Activated T-helper 2 cell treated with anti-CD3 and anti-CD28 coated beads, Interferon-gamma antibody, Interleukin-2, Interleukin-4, amounts not matched to agents 10 μg/mL and 5 μg/mL and 100 μg/mL, durations not matched to agents 14 hours and 24 hours and 36 hours (primary cell): ENCODE measurements at regions of chr1 and their contacts with region 1.

Region 1: GRCh38 chr1:30718636-30719405 is 4.6 kb downstream of the MATN1 start:
- DNase-seq: peak; percentile 96
- H3K4me3 Mint-ChIP-seq: peak overlapping the region; percentile 86
- H3K27ac Mint-ChIP-seq: peak overlapping the region; percentile 93
- H3K4me1 Mint-ChIP-seq: peaks cover 10% of the 10 kb centered on the region
- H3K27me3 Mint-ChIP-seq: no peaks in the 10 kb centered on the region

Region 2: GRCh38 chr1:29230553-29231378 is 1488.1 kb before region 1 on chr1 and contains the start of gene MECR:
- intact Hi-C with region 1: loop called (anchors 10 kb)
- DNase-seq: peak; percentile 96
- H3K4me3 Mint-ChIP-seq: peak within 1 kb of the TSS; percentile 89
- H3K27ac Mint-ChIP-seq: peak within 1 kb of the TSS; percentile 80
- H3K4me1 Mint-ChIP-seq: peaks cover 15% of the 10 kb centered on the region
- H3K27me3 Mint-ChIP-seq: peaks cover 14% of the 10 kb centered on the region
- total RNA-seq, gene MECR: 33.0 and 34.6 TPM in 2 replicates

Region 3: DNA sequence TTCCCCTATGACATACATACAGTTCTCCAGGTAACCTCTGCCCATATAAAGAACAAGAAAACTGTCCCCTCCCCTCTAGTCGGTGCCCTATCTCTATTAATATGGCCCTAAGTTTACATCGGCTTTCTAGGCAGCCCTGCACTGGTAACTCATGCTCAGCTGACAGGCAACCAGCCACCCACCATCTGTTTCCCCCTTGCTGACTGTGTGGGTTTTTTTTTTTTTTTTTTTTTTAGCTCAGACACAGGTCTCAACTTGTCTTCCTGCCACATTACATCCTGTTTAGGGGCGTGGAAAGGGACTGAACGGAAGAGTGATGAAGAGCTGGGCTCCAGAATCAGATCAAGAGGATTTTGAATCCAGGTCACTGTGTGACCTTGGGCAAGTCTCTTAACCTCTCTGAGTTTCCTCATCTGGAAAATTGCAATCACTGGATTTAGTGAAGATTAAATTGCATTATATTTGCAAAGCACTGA is 24.8 kb after region 1 on chr1:
- intact Hi-C with region 1: loop called (anchors 1 kb)
- DNase-seq: peak; percentile 70
- H3K4me3 Mint-ChIP-seq: peak overlapping the region; percentile 49
- H3K27ac Mint-ChIP-seq: peak overlapping the region; percentile 84
- H3K4me1 Mint-ChIP-seq: peaks cover 89% of the 10 kb centered on the region
- H3K27me3 Mint-ChIP-seq: no peaks in the 10 kb centered on the region

Region 4: GRCh38 chr1:30756545-30757195 is 37.8 kb after region 1 on chr1:
- intact Hi-C with region 1: loop called (anchors 2 kb)
- DNase-seq: peak; percentile 66
- H3K4me3 Mint-ChIP-seq: peak overlapping the region; percentile 97
- H3K27ac Mint-ChIP-seq: peak overlapping the region; percentile 96
- H3K4me1 Mint-ChIP-seq: peaks cover 79% of the 10 kb centered on the region
- H3K27me3 Mint-ChIP-seq: no peaks in the 10 kb centered on the region

Region 5: DNA sequence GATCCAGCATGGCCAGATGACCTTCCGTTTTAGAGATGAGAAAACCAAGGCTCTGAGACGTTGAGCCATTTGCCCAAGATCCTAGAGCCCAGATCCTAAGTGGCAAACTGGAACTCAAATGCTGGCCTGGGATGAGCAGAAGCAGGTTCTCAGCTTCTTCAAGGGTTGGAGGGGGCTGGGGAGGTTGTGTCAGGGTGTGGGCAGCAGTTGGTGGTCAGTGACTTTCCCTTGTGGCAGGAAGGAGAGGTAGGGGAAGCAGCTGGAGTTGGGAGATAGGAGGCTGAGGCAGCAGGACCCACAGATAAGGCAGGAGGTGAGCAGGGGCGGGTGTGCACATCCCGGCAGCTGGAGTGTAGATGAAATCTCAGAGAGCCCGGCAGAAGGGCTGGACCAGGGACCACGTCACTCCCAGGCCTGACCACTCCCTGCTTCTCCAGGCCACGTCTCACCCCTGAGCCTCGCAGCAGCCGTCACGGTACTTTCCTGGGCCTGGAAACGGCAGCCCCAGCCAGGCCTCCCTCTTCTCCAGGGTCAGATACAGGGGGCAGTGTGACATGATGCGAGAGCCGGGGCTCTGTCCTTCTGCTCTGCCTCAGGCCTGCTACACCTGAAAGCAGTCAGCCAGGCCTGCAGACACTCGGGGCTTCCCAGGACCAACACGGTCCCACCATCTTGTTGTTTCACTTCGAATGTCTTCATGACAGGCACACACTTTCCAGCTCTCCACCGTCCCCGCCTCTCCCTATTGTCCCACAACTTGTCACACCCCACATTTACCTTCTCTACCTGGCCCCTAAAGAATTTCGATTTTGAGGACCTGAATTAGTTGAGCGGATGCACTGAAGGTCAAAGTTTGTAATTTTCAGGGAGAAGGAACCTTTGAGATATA is 50.3 kb after region 1 on chr1:
- intact Hi-C with region 1: no loop called
- DNase-seq: no peak
- H3K4me3 Mint-ChIP-seq: no peak overlapping the region
- H3K27ac Mint-ChIP-seq: no peak overlapping the region
- H3K4me1 Mint-ChIP-seq: peaks cover 27% of the 10 kb centered on the region
- H3K27me3 Mint-ChIP-seq: peaks cover 2% of the 10 kb centered on the region

Region 6: DNA sequence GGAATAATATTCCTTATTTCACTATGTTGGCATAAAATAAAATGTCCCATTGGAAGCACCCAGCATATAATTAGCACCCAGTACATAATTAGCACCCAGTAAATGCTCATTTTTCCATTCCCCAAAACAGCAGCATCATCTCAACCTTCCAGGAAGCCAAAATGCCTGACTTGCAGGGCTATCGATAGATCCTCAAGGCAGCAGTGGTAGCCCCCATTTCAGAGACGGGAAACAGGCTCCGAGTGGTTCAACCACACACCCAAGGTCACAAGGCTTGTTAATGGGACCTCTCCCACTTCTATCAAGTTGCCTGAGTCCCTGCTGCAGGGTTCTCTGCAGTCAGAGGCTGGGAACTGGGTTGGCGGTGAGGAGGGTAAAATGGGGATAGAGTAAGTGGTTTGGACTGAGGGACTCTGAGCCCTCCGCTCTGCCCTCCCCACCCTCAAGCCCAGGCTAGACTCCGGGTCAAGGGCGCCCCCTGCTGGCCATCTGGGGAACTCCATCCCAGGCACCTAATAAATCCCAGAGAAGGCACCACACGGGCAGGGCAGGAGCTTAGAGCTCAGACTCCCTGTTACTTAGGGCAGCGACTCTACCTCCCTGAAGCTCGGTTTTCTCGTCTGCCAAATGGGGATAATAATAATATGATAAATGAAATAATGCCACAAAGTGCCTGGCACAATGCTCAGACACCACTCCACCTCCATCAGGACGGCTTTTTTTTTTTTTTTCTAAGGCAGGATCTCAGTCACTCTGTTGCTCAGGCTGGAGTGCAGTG is 60.7 kb after region 1 on chr1:
- intact Hi-C with region 1: loop called (anchors 1 kb)
- DNase-seq: peak; percentile 84
- H3K4me3 Mint-ChIP-seq: no peak overlapping the region
- H3K27ac Mint-ChIP-seq: no peak overlapping the region
- H3K4me1 Mint-ChIP-seq: peaks cover 18% of the 10 kb centered on the region
- H3K27me3 Mint-ChIP-seq: no peaks in the 10 kb centered on the region

Region 7: DNA sequence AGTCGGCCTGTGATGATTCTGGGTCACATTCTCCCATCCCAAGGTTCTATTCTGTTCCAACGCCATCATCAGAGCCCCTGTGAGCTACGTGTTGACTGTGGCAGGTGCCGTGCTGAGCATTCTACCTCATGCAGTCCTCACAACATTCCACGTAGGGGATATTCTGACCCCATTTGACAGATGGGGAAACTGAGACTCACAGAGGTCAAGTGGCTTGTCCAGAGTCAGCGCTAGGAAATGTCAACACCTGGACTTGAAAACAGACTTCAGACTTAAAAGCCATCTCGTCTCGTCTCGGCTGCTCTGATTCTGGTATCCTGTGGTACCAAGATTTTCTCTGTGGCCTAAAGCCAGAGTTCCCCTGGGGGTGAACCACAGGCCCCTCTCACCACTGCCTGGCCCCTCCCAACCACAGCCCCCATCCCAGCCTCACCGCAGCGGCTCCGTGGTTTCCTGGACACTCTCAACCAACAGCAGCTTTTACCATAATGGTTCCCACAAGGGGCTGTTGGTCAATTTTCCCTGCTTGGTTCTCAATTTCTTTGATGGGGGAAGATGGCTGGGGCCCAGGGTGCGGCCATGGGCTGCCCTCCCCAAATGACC is 150.1 kb after region 1 on chr1:
- intact Hi-C with region 1: no loop called
- DNase-seq: no peak
- H3K4me3 Mint-ChIP-seq: no peak overlapping the region
- H3K27ac Mint-ChIP-seq: no peak overlapping the region
- H3K4me1 Mint-ChIP-seq: peaks cover 4% of the 10 kb centered on the region
- H3K27me3 Mint-ChIP-seq: peaks cover 24% of the 10 kb centered on the region

Region 8: GRCh38 chr1:30911046-30911954 is 192.5 kb after region 1 on chr1:
- intact Hi-C with region 1: loop called (anchors 1 kb)
- DNase-seq: peak; percentile 36
- H3K4me3 Mint-ChIP-seq: no peak overlapping the region
- H3K27ac Mint-ChIP-seq: no peak overlapping the region
- H3K4me1 Mint-ChIP-seq: peaks cover 11% of the 10 kb centered on the region
- H3K27me3 Mint-ChIP-seq: peaks cover 30% of the 10 kb centered on the region

Region 9: GRCh38 chr1:30933874-30934252 is 215.0 kb after region 1 on chr1:
- intact Hi-C with region 1: no loop called
- DNase-seq: no peak
- H3K4me3 Mint-ChIP-seq: no peak overlapping the region
- H3K27ac Mint-ChIP-seq: no peak overlapping the region
- H3K4me1 Mint-ChIP-seq: no peaks in the 10 kb centered on the region
- H3K27me3 Mint-ChIP-seq: no peaks in the 10 kb centered on the region